CD4-positive, alpha-beta T cell (primary cell): ENCODE measurements at regions of chr3 and their contacts with region 1.

Region 1: GRCh38 chr3:46947981-46948791 is 28.4 kb downstream of the CCDC12 start:
- DNase-seq: peak; percentile 51 to 94 (median 70)
- ATAC-seq: peak; percentile 77
- H3K4me3 ChIP-seq: peak overlapping the region; percentile 1
- H3K4me3 Mint-ChIP-seq: peak overlapping the region; percentile 59
- H3K27ac ChIP-seq: peak overlapping the region; percentile 64 to 86
- H3K27ac Mint-ChIP-seq: peak overlapping the region; percentile 92
- H3K4me1 ChIP-seq: peaks cover 93% of the 10 kb centered on the region
- H3K4me1 Mint-ChIP-seq: peaks cover 84% of the 10 kb centered on the region
- H3K27me3 ChIP-seq: no peaks in the 10 kb centered on the region
- H3K27me3 Mint-ChIP-seq: no peaks in the 10 kb centered on the region
- CTCF ChIP-seq: no peak

Region 2: DNA sequence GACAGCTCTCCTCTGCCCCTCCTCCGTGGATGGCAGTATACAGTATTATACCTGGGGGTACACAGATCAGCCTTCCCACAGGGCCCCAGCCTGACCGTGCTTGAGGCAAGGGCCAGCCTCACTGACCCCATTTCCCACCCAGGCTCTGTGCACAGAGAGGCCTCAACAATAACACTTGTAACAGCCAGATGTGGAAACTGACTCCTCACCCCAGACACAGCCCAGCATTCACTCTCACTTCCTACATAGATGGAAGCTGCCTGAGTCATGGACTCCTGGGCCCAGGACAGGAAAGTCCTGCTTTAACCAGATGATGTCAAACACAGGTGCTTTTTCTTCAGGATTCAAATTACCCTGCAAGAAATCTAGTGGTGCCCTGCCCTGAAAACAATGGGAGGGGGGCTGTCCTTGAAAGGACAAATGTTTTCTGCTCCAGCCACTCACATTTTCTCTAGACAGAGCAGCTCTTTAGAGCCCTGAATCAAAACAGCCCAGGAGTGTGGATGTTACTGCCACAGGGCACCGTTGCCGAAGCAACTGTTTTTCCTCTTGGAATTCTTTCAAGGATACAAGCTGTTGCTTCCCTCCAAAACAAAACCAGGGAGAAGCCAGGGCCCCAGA is 12.0 kb after region 1 on chr3:
- CTCF ChIA-PET with region 1: interaction called, 10 read pairs
- POLR2A ChIA-PET with region 1: no interaction called
- intact Hi-C with region 1: no loop called
- DNase-seq: peak in 2 of 14 experiments; percentile 52
- ATAC-seq: no peak
- H3K4me3 ChIP-seq: no peak overlapping the region
- H3K4me3 Mint-ChIP-seq: peak overlapping the region; percentile 7
- H3K27ac ChIP-seq: no peak overlapping the region
- H3K27ac Mint-ChIP-seq: peak overlapping the region; percentile 78
- H3K4me1 ChIP-seq: peaks cover 59% of the 10 kb centered on the region
- H3K4me1 Mint-ChIP-seq: peaks cover 78% of the 10 kb centered on the region
- H3K27me3 ChIP-seq: no peaks in the 10 kb centered on the region
- H3K27me3 Mint-ChIP-seq: no peaks in the 10 kb centered on the region
- CTCF ChIP-seq: no peak

Region 3: DNA sequence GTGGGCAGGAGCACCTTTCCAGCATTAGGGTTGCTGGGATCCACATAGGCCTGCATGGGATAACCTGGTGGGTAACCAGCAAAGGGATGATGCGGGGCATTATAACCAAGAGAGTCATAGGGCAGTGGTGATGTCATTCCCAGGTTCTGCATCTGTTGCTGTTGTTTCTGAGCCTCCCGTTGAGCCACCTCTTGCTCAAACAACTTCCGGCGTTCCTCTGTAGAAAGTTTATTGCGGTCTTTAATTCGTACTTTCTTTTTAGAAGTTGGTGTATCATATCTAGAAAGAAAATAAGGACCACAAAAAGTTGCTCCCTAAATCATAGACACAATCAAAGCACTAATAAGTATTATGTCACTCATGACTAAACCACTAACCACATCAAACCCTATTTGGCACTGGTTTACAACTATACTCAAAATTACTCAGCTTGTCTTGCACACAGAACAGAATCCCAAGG is 109.1 kb after region 1 on chr3:
- CTCF ChIA-PET with region 1: no interaction called
- POLR2A ChIA-PET with region 1: no interaction called
- intact Hi-C with region 1: loop called in 1 of 2 experiments (anchors 10 kb)
- DNase-seq: peak in 13 of 14 experiments; percentile 21 to 86 (median 44)
- ATAC-seq: peak; percentile 87
- H3K4me3 ChIP-seq: no peak overlapping the region
- H3K4me3 Mint-ChIP-seq: peak overlapping the region; percentile 43
- H3K27ac ChIP-seq: peak overlapping the region; percentile 18 to 49
- H3K27ac Mint-ChIP-seq: peak overlapping the region; percentile 89
- H3K4me1 ChIP-seq: peaks cover 18% of the 10 kb centered on the region
- H3K4me1 Mint-ChIP-seq: peaks cover 61% of the 10 kb centered on the region
- H3K27me3 ChIP-seq: no peaks in the 10 kb centered on the region
- H3K27me3 Mint-ChIP-seq: no peaks in the 10 kb centered on the region
- CTCF ChIP-seq: no peak